ENCODE measurements at regions of chr16 and their contacts with region 1.

Region 1: DNA sequence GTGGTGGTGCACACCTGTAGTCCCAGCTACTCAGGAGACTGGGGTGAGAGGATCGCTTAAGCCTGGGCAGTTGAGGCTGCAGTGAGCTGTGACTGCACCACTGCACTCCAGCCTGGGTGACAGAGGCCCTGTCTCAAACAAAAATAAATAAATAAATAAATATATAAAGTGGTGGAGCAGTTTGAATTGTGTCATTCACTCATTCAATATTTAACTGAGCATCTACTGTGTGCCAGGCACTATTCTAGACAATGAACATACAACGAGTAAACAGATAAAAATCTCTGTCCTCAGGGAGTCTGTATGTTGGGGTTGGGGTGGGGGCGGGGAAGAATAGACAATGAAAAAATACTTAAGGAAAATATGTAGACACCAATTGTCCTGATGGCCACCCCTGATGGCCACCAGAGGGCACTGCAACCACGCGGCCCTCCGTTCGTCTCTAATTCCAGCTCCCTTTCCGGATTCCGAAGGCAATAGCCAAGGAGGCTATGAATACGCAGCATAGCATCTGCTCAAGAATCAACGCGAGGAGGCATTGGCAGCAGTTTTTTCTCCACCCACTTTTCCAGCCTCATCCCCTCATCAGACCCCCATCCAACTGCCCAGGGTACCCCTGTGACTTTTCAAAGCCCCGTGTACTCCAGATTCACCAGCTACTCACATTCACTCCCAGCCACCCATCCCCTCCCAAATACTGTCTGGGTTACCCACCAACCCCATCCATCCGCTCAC is 21.4 kb downstream of the QPRT start:
- DNase-seq: peak; percentile 80
- ATAC-seq: peak; percentile 30
- H3K4me3 Mint-ChIP-seq: peak overlapping the region; percentile 24
- H3K27ac Mint-ChIP-seq: peak overlapping the region; percentile 70
- H3K4me1 Mint-ChIP-seq: peaks cover 38% of the 10 kb centered on the region
- H3K27me3 Mint-ChIP-seq: no peaks in the 10 kb centered on the region

Region 2: GRCh38 chr16:29641561-29641960 is 58.9 kb before region 1 on chr16:
- CTCF ChIA-PET with region 1: interaction called, 10 read pairs
- POLR2A ChIA-PET with region 1: no interaction called
- DNase-seq: no peak
- ATAC-seq: peak; percentile 50
- H3K4me3 Mint-ChIP-seq: peak overlapping the region; percentile 68
- H3K27ac Mint-ChIP-seq: peak overlapping the region; percentile 88
- H3K4me1 Mint-ChIP-seq: peaks cover 50% of the 10 kb centered on the region
- H3K27me3 Mint-ChIP-seq: no peaks in the 10 kb centered on the region

Region 3: GRCh38 chr16:29720699-29721098 is 20.3 kb after region 1 on chr16:
- CTCF ChIA-PET with region 1: interaction called, 35 read pairs
- POLR2A ChIA-PET with region 1: no interaction called
- DNase-seq: no peak
- ATAC-seq: no peak
- H3K4me3 Mint-ChIP-seq: no peak overlapping the region
- H3K27ac Mint-ChIP-seq: no peak overlapping the region
- H3K4me1 Mint-ChIP-seq: peaks cover 7% of the 10 kb centered on the region
- H3K27me3 Mint-ChIP-seq: peaks cover 2% of the 10 kb centered on the region

Region 4: GRCh38 chr16:29784901-29785500 is 84.6 kb after region 1 on chr16:
- CTCF ChIA-PET with region 1: interaction called, 64 read pairs
- POLR2A ChIA-PET with region 1: interaction called, 25 read pairs
- DNase-seq: peak; percentile 83
- ATAC-seq: peak; percentile 95
- H3K4me3 Mint-ChIP-seq: peak overlapping the region; percentile 47
- H3K27ac Mint-ChIP-seq: no peak overlapping the region
- H3K4me1 Mint-ChIP-seq: peaks cover 25% of the 10 kb centered on the region
- H3K27me3 Mint-ChIP-seq: peaks cover 10% of the 10 kb centered on the region

Region 5: GRCh38 chr16:29805378-29806098 is 105.1 kb after region 1 on chr16:
- CTCF ChIA-PET with region 1: interaction called, 47 read pairs
- POLR2A ChIA-PET with region 1: interaction called, 8 read pairs
- DNase-seq: peak; percentile 99
- ATAC-seq: peak; percentile 72
- H3K4me3 Mint-ChIP-seq: peak overlapping the region; percentile 89
- H3K27ac Mint-ChIP-seq: peak overlapping the region; percentile 93
- H3K4me1 Mint-ChIP-seq: peaks cover 49% of the 10 kb centered on the region
- H3K27me3 Mint-ChIP-seq: no peaks in the 10 kb centered on the region

Region 6: GRCh38 chr16:29848420-29849297 is 148.2 kb after region 1 on chr16:
- CTCF ChIA-PET with region 1: interaction called, 93 read pairs
- POLR2A ChIA-PET with region 1: no interaction called
- DNase-seq: peak; percentile 87
- ATAC-seq: peak; percentile 95
- H3K4me3 Mint-ChIP-seq: no peak overlapping the region
- H3K27ac Mint-ChIP-seq: no peak overlapping the region
- H3K4me1 Mint-ChIP-seq: peaks cover 6% of the 10 kb centered on the region
- H3K27me3 Mint-ChIP-seq: no peaks in the 10 kb centered on the region

Region 7: GRCh38 chr16:29877266-29877961 is 177.0 kb after region 1 on chr16:
- CTCF ChIA-PET with region 1: no interaction called
- POLR2A ChIA-PET with region 1: no interaction called
- DNase-seq: peak; percentile 55
- ATAC-seq: peak; percentile 70
- H3K4me3 Mint-ChIP-seq: no peak overlapping the region
- H3K27ac Mint-ChIP-seq: no peak overlapping the region
- H3K4me1 Mint-ChIP-seq: peaks cover 16% of the 10 kb centered on the region
- H3K27me3 Mint-ChIP-seq: peaks cover 27% of the 10 kb centered on the region

Region 8: DNA sequence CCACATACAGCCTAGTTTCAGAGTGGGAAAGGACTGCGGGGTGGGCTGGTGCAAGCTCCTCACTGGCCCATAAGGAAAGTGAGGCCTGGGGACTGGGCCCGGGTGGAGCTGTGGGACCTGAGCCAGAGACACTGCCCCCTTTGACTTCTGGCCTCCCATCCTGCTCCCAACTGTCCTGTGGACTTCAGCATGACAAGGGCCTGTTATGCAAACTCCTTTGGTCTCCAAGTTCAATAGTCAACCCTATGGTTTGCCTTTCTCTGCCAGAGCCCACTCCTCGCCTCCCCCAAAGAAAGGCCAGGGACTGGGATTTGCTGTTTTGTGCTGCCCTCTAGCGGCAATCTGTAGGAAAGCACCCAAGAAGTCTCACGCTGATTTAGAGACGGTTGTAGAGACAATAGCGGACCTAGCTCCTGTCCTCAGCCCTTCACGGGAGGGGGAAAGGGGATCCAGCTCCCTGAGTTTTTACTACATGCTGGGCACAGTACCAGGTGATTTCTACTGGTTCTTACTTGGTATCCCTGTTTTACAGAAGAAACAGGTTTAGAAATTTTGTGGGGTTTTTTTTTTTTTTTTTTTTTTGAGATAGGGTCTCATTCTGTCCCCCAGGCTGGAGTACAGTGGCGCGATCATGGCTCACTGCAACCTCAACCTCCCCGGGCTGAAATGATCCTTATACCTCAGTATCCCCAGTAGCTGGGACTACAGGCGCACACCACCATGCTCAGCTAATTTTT is 331.8 kb after region 1 on chr16:
- CTCF ChIA-PET with region 1: interaction called, 30 read pairs
- POLR2A ChIA-PET with region 1: no interaction called
- DNase-seq: peak; percentile 81
- ATAC-seq: peak; percentile 66
- H3K4me3 Mint-ChIP-seq: no peak overlapping the region
- H3K27ac Mint-ChIP-seq: no peak overlapping the region
- H3K4me1 Mint-ChIP-seq: peaks cover 15% of the 10 kb centered on the region
- H3K27me3 Mint-ChIP-seq: peaks cover 44% of the 10 kb centered on the region